ENCODE measurements at regions of chr9 and their contacts with region 1.

Region 1: DNA sequence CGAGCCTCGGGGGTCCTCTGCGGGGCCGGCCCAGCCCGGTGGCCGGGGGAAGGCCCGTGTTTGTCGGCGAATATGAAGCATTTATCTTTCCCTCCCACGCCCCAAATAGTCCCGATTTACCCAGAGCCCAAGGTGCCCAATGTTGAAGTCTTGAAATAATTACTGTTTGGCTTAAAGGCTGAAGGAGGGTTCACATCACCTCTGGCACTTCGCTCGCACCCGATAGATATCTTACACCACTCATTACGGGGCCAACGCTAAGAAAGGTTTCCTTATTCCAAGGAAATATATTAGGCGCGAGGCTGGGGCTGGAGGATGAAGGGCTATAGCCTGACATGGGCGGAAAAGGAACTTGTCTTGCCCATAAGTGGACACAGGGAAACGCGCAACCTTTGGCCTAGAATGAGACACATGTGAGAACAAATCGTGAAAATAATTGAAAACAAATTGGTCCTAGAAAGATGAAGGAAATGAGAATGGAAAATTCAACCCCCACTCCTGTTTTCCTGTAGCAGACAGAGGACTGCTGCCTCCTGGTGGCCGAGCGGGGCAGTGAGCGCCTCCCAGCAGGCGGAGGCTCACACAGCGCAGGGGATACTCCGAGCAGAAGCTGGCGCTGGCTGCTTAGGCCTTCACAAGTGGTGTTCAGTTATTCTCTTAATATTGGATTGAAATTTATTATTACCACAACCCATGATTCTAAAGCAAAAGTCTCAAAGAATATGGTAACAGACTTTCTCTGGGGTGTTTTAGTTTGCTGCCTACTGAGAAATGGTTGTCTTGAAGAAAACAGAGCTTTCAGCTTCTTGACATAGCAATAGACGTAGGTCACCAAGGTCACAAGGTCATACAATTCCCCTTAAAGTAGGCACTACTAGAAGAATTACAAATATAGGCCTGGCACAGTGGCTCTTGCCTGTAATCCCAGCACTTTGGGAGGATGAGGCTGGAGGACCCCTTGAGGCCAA is 7.9 kb downstream of the CCL21 start:
- DNase-seq: peak; percentile 74 to 82 (median 75)
- H3K4me3 ChIP-seq: peak overlapping the region; percentile 19 to 80 (median 60)
- H3K27ac ChIP-seq: no peak overlapping the region
- H3K4me1 ChIP-seq: peaks cover 3 to 13% (median 8%) of the 10 kb centered on the region in 4 experiments
- H3K27me3 ChIP-seq: peaks cover 3 to 11% (median 10%) of the 10 kb centered on the region in 5 experiments

Region 2: GRCh38 chr9:34536685-34537084 is 165.4 kb before region 1 on chr9:
- CTCF ChIA-PET with region 1: no interaction called
- POLR2A ChIA-PET with region 1: no interaction called
- DNase-seq: no peak
- H3K4me3 ChIP-seq: no peak overlapping the region
- H3K27ac ChIP-seq: no peak overlapping the region
- H3K4me1 ChIP-seq: no peaks in the 10 kb centered on the region
- H3K27me3 ChIP-seq: peaks cover 0 to 16% (median 6%) of the 10 kb centered on the region in 5 experiments

Region 3: DNA sequence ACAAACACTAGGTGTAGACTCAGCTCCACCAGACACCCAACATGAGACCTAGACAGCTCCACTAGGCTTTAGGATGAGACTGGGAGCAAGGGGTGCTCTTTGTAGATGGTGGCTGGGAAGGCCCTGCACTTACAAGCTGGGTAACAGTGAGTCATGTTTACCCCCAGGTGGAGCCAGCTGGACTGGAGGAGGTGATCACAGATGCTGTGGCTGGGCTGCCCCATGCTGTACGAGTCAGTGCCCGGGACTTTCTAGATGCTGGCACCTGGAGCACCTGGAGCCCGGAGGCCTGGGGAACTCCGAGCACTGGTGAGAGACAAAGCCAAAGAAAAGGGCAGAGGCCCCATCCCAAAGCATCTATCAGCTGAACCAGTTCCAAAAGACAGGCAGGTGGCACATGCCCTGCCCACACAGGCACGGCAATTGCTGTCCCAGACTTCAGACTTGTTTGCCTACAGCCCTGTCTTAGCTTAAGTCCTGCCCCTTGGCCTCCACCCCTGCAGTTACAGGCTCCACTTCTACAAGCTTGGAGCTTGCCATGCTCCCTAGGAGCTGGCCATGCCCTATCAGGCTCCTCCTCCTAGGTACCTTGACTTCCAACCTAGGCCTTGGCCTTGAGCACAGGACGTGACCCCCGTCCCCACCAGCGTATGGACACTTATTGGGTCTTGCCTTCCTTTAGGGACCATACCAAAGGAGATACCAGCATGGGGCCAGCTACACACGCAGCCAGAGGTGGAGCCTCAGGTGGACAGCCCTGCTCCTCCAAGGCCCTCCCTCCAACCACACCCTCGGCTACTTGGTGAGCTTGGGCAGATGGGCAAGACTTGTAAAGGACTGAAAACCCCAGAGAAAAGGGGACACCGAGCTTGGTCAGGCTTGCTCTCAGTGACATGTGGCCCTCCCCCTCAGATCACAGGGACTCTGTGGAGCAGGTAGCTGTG is 42.2 kb before region 1 on chr9:
- CTCF ChIA-PET with region 1: interaction called, 12 read pairs
- POLR2A ChIA-PET with region 1: no interaction called
- DNase-seq: no peak
- H3K4me3 ChIP-seq: no peak overlapping the region
- H3K27ac ChIP-seq: no peak overlapping the region
- H3K4me1 ChIP-seq: peaks cover 0 to 6% (median 5%) of the 10 kb centered on the region in 4 experiments
- H3K27me3 ChIP-seq: peaks cover 0 to 2% (median 0%) of the 10 kb centered on the region in 5 experiments

Region 4: GRCh38 chr9:34675048-34675714 is 26.9 kb before region 1 on chr9:
- CTCF ChIA-PET with region 1: interaction called, 220 read pairs
- POLR2A ChIA-PET with region 1: interaction called, 3 read pairs
- DNase-seq: peak; percentile 85 to 90 (median 85)
- H3K4me3 ChIP-seq: no peak overlapping the region
- H3K27ac ChIP-seq: no peak overlapping the region
- H3K4me1 ChIP-seq: no peaks in the 10 kb centered on the region
- H3K27me3 ChIP-seq: no peaks in the 10 kb centered on the region

Region 5: GRCh38 chr9:34686231-34686630 is 15.8 kb before region 1 on chr9:
- CTCF ChIA-PET with region 1: interaction called, 63 read pairs
- POLR2A ChIA-PET with region 1: no interaction called
- DNase-seq: no peak
- H3K4me3 ChIP-seq: no peak overlapping the region
- H3K27ac ChIP-seq: no peak overlapping the region
- H3K4me1 ChIP-seq: peaks cover under 1 to 20% (median 10%) of the 10 kb centered on the region in 4 experiments
- H3K27me3 ChIP-seq: peaks cover 0 to 2% (median 0%) of the 10 kb centered on the region in 5 experiments

Region 6: GRCh38 chr9:34690983-34691935 is 10.8 kb before region 1 on chr9 and contains the start of gene CCL19:
- CTCF ChIA-PET with region 1: interaction called, 63 read pairs
- POLR2A ChIA-PET with region 1: no interaction called
- DNase-seq: peak; percentile 59 to 88 (median 87)
- H3K4me3 ChIP-seq: peak within 1 kb of the TSS in 1 of 7 experiments; percentile 23
- H3K27ac ChIP-seq: no peak within 1 kb of the TSS
- H3K4me1 ChIP-seq: peaks cover 3 to 29% (median 16%) of the 10 kb centered on the region in 4 experiments
- H3K27me3 ChIP-seq: no peaks in the 10 kb centered on the region

Region 7: GRCh38 chr9:34717996-34718614 is 16.1 kb after region 1 on chr9:
- CTCF ChIA-PET with region 1: interaction called, 28 read pairs
- POLR2A ChIA-PET with region 1: interaction called, 6 read pairs
- DNase-seq: no peak
- H3K4me3 ChIP-seq: no peak overlapping the region
- H3K27ac ChIP-seq: no peak overlapping the region
- H3K4me1 ChIP-seq: no peaks in the 10 kb centered on the region
- H3K27me3 ChIP-seq: peaks cover 0 to 9% (median 5%) of the 10 kb centered on the region in 5 experiments

Region 8: DNA sequence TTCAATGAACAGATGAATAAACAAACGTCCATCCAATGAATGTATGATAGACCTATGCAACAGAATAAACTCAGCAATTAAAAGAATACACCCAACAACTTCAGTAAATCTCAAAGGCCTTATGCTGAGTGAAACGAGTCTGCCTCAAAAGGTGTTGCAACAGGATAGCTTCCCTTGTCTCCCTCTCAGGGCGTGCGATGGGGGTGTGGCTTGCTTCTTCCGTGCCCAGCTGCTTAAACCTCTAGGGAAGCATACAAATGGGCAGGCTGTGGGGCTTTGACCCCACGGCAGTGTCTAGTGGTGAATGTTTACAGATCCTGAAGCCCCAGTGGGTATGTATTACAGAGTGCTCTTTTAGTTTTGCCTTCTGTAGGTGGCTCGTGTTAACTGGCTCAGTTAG is 94.9 kb after region 1 on chr9:
- CTCF ChIA-PET with region 1: no interaction called
- POLR2A ChIA-PET with region 1: no interaction called
- DNase-seq: no peak
- H3K4me3 ChIP-seq: no peak overlapping the region
- H3K27ac ChIP-seq: no peak overlapping the region
- H3K4me1 ChIP-seq: peaks cover 0 to 2% (median 0%) of the 10 kb centered on the region in 4 experiments
- H3K27me3 ChIP-seq: peaks cover 0 to 37% (median 11%) of the 10 kb centered on the region in 5 experiments

Region 9: DNA sequence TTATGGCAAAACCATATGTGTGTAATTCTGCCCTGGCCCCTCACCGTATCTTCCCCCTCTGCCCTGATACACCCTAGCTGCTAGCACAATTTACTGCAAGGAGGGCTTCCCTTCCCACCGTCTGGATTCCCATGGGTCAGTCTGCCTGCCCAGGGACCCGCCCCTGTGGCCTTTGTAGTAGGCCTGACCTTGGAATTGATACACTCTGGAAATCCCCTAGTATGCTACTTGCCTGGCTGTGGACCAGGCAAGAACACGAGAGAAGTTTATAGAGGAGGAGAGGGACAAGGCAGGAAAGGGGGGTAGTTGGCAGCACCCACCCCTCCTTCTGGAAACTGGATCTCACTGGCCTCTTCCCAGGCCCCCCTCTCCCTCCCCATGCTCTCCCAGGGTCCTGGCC is 123.7 kb after region 1 on chr9:
- CTCF ChIA-PET with region 1: no interaction called
- POLR2A ChIA-PET with region 1: no interaction called
- DNase-seq: no peak
- H3K4me3 ChIP-seq: no peak overlapping the region
- H3K27ac ChIP-seq: no peak overlapping the region
- H3K4me1 ChIP-seq: no peaks in the 10 kb centered on the region
- H3K27me3 ChIP-seq: peaks cover 0 to 7% (median 5%) of the 10 kb centered on the region in 5 experiments

Measured in common myeloid progenitor, CD34-positive (primary cell).